Panc1 (cell line): ENCODE measurements at regions of chr10 and their contacts with region 1.

Region 1: DNA sequence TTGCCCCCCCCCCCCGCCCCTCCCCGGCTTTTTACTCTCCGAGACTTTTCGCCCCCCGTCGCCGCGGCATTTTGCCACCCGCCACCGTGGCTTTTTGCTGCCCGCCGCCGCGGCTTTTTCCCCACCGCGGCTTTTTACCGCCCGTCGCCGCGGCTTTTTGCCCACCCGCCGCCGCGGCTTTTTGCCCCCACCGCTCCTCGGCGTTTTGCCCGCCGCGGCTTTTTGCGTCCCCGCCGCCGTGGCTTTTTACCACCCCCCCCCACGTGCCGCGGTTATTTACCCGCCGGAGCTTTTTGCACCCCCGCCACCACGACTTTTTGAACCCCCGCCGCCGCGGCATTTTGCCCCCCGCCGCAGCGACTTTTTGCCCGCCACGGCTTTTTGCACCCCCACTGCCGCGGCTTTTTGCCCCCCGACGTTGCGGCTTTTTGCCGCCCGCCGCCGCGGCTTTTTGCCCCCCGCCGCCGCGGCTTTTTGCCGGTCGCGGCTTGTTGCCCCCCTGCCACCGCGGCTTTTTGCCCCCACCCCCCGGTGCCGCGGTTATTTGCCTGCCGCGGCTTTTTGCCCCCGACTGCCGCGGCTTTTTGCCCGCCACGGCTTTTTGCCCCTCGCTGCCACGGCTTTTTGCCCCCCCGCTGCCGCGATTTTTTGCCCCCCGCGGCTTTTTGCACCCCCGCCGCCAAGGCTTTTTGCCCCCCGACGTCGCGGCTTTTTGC is 461.1 kb downstream of the ZNF33B start:
- DNase-seq: no peak
- ATAC-seq: no peak
- H3K4me3 ChIP-seq: no peak overlapping the region
- H3K27ac ChIP-seq: no peak overlapping the region
- H3K4me1 ChIP-seq: no peaks in the 10 kb centered on the region
- H3K27me3 ChIP-seq: 0 out of 2 replicates have a peak, but pooled peaks cover 1% of the 10 kb centered on the region
- CTCF ChIP-seq: no peak

Region 2: GRCh38 chr10:42242135-42242805 is 65.0 kb after region 1 on chr10:
- CTCF ChIA-PET with region 1: no interaction called
- POLR2A ChIA-PET with region 1: interaction called, 10 read pairs
- in situ Hi-C with region 1: no loop called
- intact Hi-C with region 1: no loop called
- DNase-seq: no peak
- ATAC-seq: no peak
- H3K4me3 ChIP-seq: no peak overlapping the region
- H3K27ac ChIP-seq: no peak overlapping the region
- H3K4me1 ChIP-seq: no peaks in the 10 kb centered on the region
- H3K27me3 ChIP-seq: no peaks in the 10 kb centered on the region
- CTCF ChIP-seq: no peak

Region 3: GRCh38 chr10:42428534-42428933 is 251.3 kb after region 1 on chr10:
- CTCF ChIA-PET with region 1: interaction called, 12 read pairs
- POLR2A ChIA-PET with region 1: no interaction called
- in situ Hi-C with region 1: no loop called
- intact Hi-C with region 1: no loop called
- DNase-seq: no peak
- ATAC-seq: no peak
- H3K4me3 ChIP-seq: no peak overlapping the region
- H3K27ac ChIP-seq: no peak overlapping the region
- H3K4me1 ChIP-seq: no peaks in the 10 kb centered on the region
- H3K27me3 ChIP-seq: no peaks in the 10 kb centered on the region; the same call in 1 of the 2 replicates
- CTCF ChIP-seq: peak; percentile 64; the same call in 1 of the 2 replicates